Dorsolateral prefrontal cortex (tissue), 120 donors: ENCODE measurements at regions of chr9 and their contacts with region 1.

Region 1: GRCh38 chr9:36166101-36166927 is 2.9 kb upstream of the CCIN start:
- DNase-seq: peak; percentile 68 to 93 (median 81)
- H3K4me3 ChIP-seq: peak overlapping the region; percentile 41 to 88 (median 68)
- H3K27ac ChIP-seq: peak overlapping the region in 58 of 59 donors; percentile 24 to 95 (median 78)
- H3K27me3 ChIP-seq: no peaks in the 10 kb centered on the region
- CTCF ChIP-seq: peak; percentile 48 to 98 (median 95)

Region 2: GRCh38 chr9:35954942-35955546 is 211.3 kb before region 1 on chr9:
- intact Hi-C with region 1: loop called in 1 of 2 experiments (anchors 5 kb)
- DNase-seq: peak in 4 of 10 donors; percentile 37 to 77 (median 50)
- H3K4me3 ChIP-seq: peak overlapping the region in 8 of 59 donors; percentile 1 to 27 (median 10)
- H3K27ac ChIP-seq: no peak overlapping the region
- H3K27me3 ChIP-seq: peaks cover 0 to 5% (median 0%) of the 10 kb centered on the region in 45 donors
- CTCF ChIP-seq: peak; percentile 72 to 93 (median 85)

Region 3: GRCh38 chr9:36008774-36009300 is 157.5 kb before region 1 on chr9:
- intact Hi-C with region 1: loop called in 1 of 2 experiments (anchors 10 kb)
- DNase-seq: peak in 5 of 10 donors; percentile 6 to 57 (median 37)
- H3K4me3 ChIP-seq: peak overlapping the region in 1 of 59 donors; percentile 24
- H3K27ac ChIP-seq: no peak overlapping the region
- H3K27me3 ChIP-seq: peaks cover 0 to 17% (median 0%) of the 10 kb centered on the region in 45 donors
- CTCF ChIP-seq: peak; percentile 73 to 98 (median 93)

Region 4: GRCh38 chr9:36023260-36024048 is 142.9 kb before region 1 on chr9:
- intact Hi-C with region 1: loop called in 1 of 2 experiments (anchors 10 kb)
- DNase-seq: peak; percentile 29 to 75 (median 64)
- H3K4me3 ChIP-seq: no peak overlapping the region
- H3K27ac ChIP-seq: no peak overlapping the region
- H3K27me3 ChIP-seq: no peaks in the 10 kb centered on the region
- CTCF ChIP-seq: peak; percentile 54 to 85 (median 74)

Region 5: GRCh38 chr9:36036780-36037548 is 129.3 kb before region 1 on chr9 and contains the start of gene RECK:
- intact Hi-C with region 1: no loop called
- DNase-seq: peak; percentile 83 to 94 (median 91)
- H3K4me3 ChIP-seq: peak within 1 kb of the TSS; percentile 61 to 99 (median 87)
- H3K27ac ChIP-seq: peak within 1 kb of the TSS in 57 of 59 donors; percentile 33 to 90 (median 79)
- H3K27me3 ChIP-seq: no peaks in the 10 kb centered on the region
- CTCF ChIP-seq: peak in 12 of 56 donors; percentile 3 to 44 (median 22)
- total RNA-seq, gene RECK: 6.6 to 15.7 (median 11.5) TPM

Region 6: DNA sequence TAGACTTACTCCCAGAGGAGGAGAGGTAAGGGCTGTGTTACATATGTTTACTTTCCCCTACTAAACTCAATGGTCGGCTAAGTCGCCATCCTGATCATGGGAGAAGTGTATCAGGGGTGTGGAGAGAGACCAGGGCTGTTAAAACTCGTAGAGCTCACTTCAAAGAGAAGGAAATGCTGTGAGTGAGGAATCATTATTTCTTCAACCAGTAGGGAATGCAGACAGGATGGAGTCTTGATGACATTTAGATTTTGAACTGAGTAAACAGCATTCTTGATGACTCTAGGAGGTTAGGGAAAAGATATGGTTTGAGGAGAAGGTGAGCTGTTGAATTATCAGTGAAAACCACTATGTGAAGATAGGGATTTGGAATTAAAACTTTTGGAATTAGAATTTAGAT is 112.3 kb before region 1 on chr9:
- intact Hi-C with region 1: no loop called
- DNase-seq: no peak
- H3K4me3 ChIP-seq: no peak overlapping the region
- H3K27ac ChIP-seq: no peak overlapping the region
- H3K27me3 ChIP-seq: no peaks in the 10 kb centered on the region
- CTCF ChIP-seq: no peak

Region 7: DNA sequence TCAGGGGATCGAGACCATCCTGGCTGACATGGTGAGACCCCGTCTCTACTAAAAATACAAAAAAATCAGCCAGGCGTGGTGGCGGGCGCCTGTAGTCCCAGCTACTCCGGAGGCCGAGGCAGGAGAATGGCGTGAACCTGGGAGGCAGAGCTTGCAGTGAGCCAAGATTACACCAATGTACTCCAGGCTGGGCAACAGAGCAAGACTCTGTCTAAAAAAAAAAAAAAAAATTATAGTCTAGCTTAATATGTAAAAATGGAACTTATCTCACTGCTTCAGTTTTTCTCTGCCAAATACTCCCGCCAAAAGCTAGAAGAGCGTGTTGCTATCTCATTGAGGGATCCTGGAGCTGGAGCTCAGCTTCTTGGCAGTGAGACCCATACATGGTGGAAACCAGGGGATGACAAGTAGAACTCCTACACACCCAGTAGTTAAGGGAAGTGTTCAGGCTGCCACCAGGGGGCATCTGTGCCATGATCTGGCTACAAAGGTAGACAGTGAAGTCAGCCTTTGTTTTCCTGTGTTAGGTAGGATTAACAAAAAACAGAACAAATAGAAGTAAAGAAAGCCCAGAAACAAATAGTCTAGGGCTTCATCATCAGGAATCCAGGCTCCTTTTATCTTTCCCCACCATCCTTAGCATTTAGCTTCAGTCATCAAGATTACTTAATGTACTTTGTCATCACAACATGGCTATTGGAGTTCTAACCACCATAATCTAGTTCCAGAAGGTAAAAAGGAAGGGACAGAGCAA is 63.4 kb before region 1 on chr9:
- intact Hi-C with region 1: loop called (anchors 1 to 2 kb)
- DNase-seq: peak; percentile 74 to 92 (median 82)
- H3K4me3 ChIP-seq: no peak overlapping the region
- H3K27ac ChIP-seq: peak overlapping the region in 27 of 59 donors; percentile 4 to 69 (median 37)
- H3K27me3 ChIP-seq: no peaks in the 10 kb centered on the region
- CTCF ChIP-seq: peak; percentile 67 to 90 (median 82)

Region 8: DNA sequence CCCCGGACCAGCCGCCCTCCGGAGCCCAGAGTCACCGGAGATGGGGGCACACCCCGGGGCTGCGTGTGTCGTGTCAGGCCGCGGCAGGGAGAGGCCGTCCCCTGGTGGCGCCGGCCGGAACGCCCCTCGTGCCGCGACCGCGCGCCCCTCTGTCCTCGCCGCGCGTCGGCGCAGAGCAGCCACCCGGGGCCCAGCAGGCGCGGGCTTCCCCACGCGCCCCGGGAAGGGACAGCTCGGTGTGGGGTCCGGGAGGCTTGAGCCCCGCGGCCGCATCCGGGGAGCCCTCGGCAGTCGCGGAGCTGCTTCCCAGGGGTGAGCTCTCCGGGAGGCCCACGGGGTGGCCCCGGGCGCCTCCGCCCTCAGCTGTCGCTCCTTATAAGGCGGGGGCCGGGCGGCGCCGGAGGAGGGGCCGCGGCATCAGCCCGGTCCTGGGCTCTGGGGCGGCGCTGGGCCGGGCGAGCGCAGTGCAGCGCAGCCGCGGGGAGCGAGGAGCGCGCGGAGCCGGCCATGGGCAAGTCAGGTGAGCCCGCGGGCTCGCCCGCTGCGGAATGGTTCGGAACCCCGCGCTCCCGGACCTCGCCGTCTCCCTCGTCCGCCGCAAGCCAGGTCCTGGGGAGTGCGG is 29.9 kb before region 1 on chr9 and contains the start of gene GLIPR2:
- intact Hi-C with region 1: loop called in 1 of 2 experiments (anchors 2 kb)
- DNase-seq: peak; percentile 55 to 89 (median 74)
- H3K4me3 ChIP-seq: peak within 1 kb of the TSS; percentile 40 to 98 (median 83)
- H3K27ac ChIP-seq: peak within 1 kb of the TSS in 56 of 59 donors; percentile 11 to 86 (median 74)
- H3K27me3 ChIP-seq: no peaks in the 10 kb centered on the region
- CTCF ChIP-seq: peak in 37 of 56 donors; percentile 7 to 58 (median 37)
- total RNA-seq, gene GLIPR2: 4.1 to 41.0 (median 11.6) TPM

Region 9: DNA sequence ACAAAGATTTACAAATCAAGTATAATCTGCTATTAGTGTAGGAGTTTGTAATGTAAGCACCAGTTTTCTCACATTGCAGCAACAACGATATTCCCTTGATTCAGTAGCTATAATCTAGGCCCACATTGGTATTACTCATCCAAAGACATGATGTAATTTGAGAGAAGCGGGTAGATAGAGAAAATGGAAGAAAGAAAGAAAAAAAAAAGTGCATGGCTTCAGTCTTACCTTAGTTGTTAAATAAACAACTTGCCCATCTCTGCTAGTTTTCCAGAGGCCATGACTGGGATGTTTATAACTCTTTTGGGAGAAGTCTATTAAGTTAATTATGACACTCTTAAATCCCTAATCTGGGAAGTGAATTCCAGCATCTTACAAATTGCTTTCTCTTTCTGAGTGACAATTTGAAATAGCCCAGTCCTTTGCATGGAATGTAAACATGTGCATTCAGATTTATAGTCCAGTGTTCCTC is 409.1 kb after region 1 on chr9:
- intact Hi-C with region 1: no loop called
- DNase-seq: no peak
- H3K4me3 ChIP-seq: no peak overlapping the region
- H3K27ac ChIP-seq: no peak overlapping the region
- H3K27me3 ChIP-seq: no peaks in the 10 kb centered on the region
- CTCF ChIP-seq: no peak